PC-9 (cell line): ENCODE measurements at regions of chr17 and their contacts with region 1.

Region 1: GRCh38 chr17:33012522-33013033 is 20.9 kb downstream of the SPACA3 start:
- DNase-seq: peak; percentile 42 to 54
- H3K4me3 ChIP-seq: no peak overlapping the region
- H3K27ac ChIP-seq: no peak overlapping the region
- H3K4me1 ChIP-seq: 0 out of 2 replicates have a peak, but pooled peaks cover 9% of the 10 kb centered on the region
- H3K27me3 ChIP-seq: peaks cover 68% of the 10 kb centered on the region
- CTCF ChIP-seq: no peak

Region 2: DNA sequence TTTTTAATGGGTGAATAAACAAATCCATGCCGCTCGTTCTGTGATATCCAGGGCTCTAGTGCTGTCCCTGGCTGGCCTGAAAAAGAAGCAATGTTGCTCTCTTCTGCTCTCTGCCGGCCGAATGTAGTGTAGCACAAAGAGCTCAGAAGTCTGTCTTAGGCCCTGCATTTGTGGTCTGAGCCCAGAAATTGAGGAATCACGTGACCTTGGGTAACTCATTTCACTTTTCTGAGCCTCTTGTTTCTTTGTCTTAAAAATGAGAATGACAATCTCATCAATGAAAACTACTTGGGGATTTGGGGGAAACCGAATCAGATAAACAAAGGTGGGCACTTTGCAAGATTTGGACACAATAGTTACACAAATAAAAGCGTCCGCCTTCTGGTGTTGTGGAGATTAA is 662.1 kb after region 1 on chr17:
- CTCF ChIA-PET with region 1: no interaction called
- POLR2A ChIA-PET with region 1: no interaction called
- intact Hi-C with region 1: loop called (anchors 10 kb)
- DNase-seq: peak in 1 of 2 experiments; percentile 37
- H3K4me3 ChIP-seq: no peak overlapping the region
- H3K27ac ChIP-seq: no peak overlapping the region
- H3K4me1 ChIP-seq: no peaks in the 10 kb centered on the region
- H3K27me3 ChIP-seq: no peaks in the 10 kb centered on the region
- CTCF ChIP-seq: peak; percentile 73